ENCODE measurements at regions of chr21 and their contacts with region 1.

Region 1: DNA sequence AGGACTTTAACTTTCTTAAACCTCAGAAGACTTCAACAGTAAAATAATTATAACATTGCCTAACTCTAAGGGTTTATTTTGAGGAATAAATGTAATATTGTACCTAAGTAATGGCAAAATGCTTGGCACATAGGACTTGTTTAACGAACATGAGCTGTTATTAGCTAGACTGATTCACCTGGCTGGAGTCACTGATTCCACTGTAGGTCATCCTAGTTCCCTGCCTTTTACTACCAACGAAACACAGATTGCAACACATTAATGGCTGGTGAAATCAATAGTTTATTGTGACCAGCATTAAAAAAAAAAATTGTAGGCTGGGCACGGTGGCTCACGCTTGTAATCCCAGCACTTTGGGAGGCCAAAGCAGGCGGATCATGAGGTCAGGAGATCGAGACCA is 45.5 kb upstream of the ATP5PO start:
- DNase-seq: no peak
- H3K4me3 Mint-ChIP-seq: no peak overlapping the region
- H3K27ac Mint-ChIP-seq: no peak overlapping the region
- H3K4me1 Mint-ChIP-seq: peaks cover 14% of the 10 kb centered on the region
- H3K27me3 Mint-ChIP-seq: no peaks in the 10 kb centered on the region

Region 2: DNA sequence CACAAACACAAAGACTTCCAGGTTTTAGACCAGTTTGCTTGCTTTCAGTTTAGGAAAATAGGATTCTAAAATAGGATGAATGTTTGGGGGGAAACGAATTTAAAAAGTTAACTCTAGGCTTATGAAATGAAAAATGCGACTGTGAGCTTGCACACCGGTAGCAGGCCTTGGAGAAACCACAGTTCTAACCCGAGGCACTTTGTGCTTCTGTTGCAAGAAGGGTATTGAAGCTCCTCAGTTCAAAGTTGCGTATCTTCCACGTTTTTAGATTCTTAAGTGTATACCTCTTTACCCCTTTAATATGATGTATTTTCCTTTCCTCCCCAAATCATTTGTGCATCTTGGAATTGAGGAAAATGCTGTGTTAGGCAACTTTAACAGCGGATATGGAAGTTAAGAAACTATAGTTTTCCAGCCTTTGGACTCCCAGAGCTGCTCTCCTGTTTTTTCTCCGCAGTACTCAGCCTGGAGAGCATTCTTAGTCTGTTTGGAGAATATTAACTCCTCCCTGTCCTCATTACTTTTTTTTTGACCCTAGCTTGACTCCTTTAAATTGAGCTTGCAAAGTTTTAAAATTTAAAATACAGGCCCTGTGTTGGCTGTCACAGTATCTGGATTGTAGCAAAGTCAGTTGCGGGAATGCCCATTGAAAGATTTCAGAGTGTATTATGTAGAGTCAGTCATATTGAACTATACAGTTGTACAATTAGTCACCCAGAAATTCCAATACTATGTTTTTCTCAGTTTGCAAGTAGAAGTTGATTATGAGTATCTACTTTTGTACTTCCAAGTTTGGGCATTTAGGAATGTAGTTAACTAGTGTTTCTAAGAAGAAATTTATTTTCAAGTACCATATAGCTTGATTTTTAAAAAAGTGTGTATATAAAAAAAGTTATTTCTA is 114.9 kb after region 1 on chr21:
- CTCF ChIA-PET with region 1: no interaction called
- POLR2A ChIA-PET with region 1: interaction called, 11 read pairs
- DNase-seq: peak; percentile 34
- H3K4me3 Mint-ChIP-seq: peak overlapping the region; percentile 84
- H3K27ac Mint-ChIP-seq: peak overlapping the region; percentile 88
- H3K4me1 Mint-ChIP-seq: peaks cover 75% of the 10 kb centered on the region
- H3K27me3 Mint-ChIP-seq: no peaks in the 10 kb centered on the region

Region 3: GRCh38 chr21:34113842-34114241 is 152.8 kb after region 1 on chr21:
- CTCF ChIA-PET with region 1: no interaction called
- POLR2A ChIA-PET with region 1: no interaction called
- DNase-seq: no peak
- H3K4me3 Mint-ChIP-seq: no peak overlapping the region
- H3K27ac Mint-ChIP-seq: no peak overlapping the region
- H3K4me1 Mint-ChIP-seq: peaks cover 33% of the 10 kb centered on the region
- H3K27me3 Mint-ChIP-seq: no peaks in the 10 kb centered on the region